Activated CD4-positive, alpha-beta memory T cell treated with anti-CD3 and anti-CD28 coated beads for 36 hours (primary cell): ENCODE measurements at regions of chr20 and their contacts with region 1.

Region 1: DNA sequence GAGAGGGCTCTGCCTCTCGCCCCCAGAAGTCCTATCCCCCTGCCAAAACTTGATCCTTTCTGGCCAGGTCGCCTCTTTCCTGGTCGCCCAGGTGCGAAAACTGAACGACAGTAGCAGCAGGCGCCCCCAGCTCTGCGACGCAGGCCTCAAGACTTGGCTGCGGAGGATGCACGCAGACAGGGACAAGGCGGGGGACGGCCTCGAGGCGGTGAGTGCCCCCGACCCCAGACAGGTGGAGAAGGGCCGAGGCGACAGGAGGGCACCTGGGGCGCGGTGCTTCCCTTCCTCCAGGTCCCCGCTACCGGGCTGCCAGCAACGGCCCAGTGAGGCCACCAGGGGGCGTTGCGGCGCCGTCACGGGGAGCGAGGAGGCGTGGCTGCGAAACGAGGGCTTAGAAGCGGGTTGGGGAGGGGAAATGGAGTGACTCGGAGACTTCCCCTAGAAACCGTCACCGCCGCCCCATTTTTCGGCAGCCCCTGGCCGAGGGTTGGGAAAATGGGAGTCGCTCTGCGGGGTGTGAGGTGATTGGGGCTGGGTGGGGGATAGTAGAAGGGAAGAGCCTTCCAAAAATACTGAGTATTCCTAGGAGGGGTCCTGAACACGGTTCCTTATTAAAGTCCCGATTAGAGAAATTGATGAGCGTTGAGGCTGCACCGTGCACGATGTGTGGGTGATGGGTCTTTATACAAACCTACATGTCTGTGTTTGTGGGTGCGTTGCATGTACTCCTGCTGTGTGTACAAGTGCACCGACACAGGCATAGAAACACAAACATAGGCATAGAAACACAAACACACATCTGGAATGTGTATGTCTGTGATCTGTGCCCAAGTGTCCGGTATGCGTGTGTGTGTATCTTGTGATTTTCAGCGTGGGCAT is 44.6 kb downstream of the ARHGAP40 start:
- DNase-seq: peak; percentile 93
- H3K4me3 Mint-ChIP-seq: peak overlapping the region; percentile 43
- H3K27ac Mint-ChIP-seq: no peak overlapping the region
- H3K4me1 Mint-ChIP-seq: peaks cover 7% of the 10 kb centered on the region
- H3K27me3 Mint-ChIP-seq: peaks cover 23% of the 10 kb centered on the region

Region 2: DNA sequence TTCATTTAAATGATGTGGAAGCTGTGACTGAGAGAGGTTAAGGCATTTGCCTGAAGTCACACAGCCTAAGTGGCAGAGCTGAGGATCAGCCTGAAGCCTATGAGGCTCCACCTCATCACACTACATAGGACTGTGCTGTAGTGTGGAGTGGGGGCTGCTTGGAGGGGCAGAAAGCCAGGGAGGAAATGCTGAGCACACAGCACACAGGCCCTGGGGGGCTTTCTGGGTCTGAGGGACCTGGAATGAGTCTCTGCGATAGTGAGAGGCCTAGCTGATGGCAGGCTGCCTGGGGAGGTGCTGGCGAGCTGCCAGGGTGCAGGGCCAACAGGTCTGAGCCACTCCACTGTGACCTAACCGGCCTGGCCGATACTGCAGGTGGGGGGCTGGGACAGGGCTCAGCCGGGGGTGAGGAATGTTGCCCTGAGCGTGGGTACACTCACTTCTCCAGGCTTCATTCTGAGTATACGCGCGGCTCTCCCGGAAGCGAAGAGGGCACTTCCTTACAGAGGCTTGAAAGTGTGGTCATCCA is 46.7 kb before region 1 on chr20:
- CTCF ChIA-PET with region 1: no interaction called
- POLR2A ChIA-PET with region 1: no interaction called
- intact Hi-C with region 1: no loop called
- DNase-seq: no peak
- H3K4me3 Mint-ChIP-seq: no peak overlapping the region
- H3K27ac Mint-ChIP-seq: no peak overlapping the region
- H3K4me1 Mint-ChIP-seq: peaks cover 7% of the 10 kb centered on the region
- H3K27me3 Mint-ChIP-seq: peaks cover 26% of the 10 kb centered on the region

Region 3: GRCh38 chr20:38658879-38659596 is 12.8 kb after region 1 on chr20:
- CTCF ChIA-PET with region 1: interaction called, 10 read pairs
- POLR2A ChIA-PET with region 1: no interaction called
- intact Hi-C with region 1: no loop called
- DNase-seq: peak; percentile 36
- H3K4me3 Mint-ChIP-seq: no peak overlapping the region
- H3K27ac Mint-ChIP-seq: no peak overlapping the region
- H3K4me1 Mint-ChIP-seq: no peaks in the 10 kb centered on the region
- H3K27me3 Mint-ChIP-seq: peaks cover 37% of the 10 kb centered on the region

Region 4: DNA sequence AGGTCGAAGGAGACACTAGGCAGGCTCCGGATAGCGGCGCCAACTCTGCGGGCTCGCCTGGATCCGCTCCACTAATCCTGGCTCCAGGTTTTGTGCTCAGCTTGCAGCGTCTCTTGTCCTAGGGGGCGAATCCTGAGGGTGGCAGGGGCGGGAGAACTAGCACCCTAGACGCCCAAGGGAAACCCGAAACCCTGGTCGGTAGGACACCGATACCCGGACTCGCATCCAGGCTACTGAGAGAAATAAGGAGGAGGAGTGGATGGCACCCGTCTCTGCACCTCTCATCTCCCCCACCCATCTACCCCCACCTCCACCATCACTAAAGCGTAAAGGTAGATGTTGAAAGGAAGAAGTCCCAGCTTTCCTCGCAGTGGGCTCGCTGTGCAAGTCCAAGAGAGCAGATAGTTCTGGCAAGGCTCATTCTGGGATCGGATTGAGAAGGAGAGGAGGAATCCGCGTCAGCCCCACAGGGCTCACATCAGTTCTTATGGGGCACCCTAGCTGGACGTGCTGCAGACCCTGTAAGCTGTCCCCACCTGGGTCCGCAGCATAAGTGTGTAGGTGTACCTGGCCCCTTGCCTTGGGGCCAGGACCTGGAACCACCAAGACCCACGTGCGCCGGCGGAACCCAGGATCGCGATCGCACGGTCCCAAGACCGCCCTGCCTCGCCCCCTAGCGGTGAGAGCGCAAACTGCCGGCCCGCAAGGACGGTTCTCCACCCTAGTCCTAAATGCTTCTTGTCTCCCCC is 84.9 kb after region 1 on chr20:
- CTCF ChIA-PET with region 1: interaction called, 17 read pairs
- POLR2A ChIA-PET with region 1: no interaction called
- intact Hi-C with region 1: loop called (anchors 1 kb)
- DNase-seq: peak; percentile 85
- H3K4me3 Mint-ChIP-seq: peak overlapping the region; percentile 58
- H3K27ac Mint-ChIP-seq: peak overlapping the region; percentile 52
- H3K4me1 Mint-ChIP-seq: peaks cover 42% of the 10 kb centered on the region
- H3K27me3 Mint-ChIP-seq: peaks cover 85% of the 10 kb centered on the region